Naive thymus-derived CD4-positive, alpha-beta T cell (primary cell): ENCODE measurements at regions of chr17 and their contacts with region 1.

Region 1: GRCh38 chr17:81935709-81936084 is 1.4 kb downstream of the PYCR1 start:
- DNase-seq: no peak
- ATAC-seq: no peak
- H3K4me3 ChIP-seq: no peak overlapping the region
- H3K4me3 Mint-ChIP-seq: peak overlapping the region in 8 of 10 donors; percentile 24 to 74 (median 52)
- H3K27ac ChIP-seq: no peak overlapping the region
- H3K27ac Mint-ChIP-seq: peak overlapping the region in 1 of 9 donors; percentile 25
- H3K4me1 ChIP-seq: peaks cover 0 to 3% of the 10 kb centered on the region in 2 donors
- H3K4me1 Mint-ChIP-seq: peaks cover 0 to 13% (median 9%) of the 10 kb centered on the region in 7 donors
- H3K27me3 ChIP-seq: no peaks in the 10 kb centered on the region
- H3K27me3 Mint-ChIP-seq: peaks cover 0 to 18% (median 0%) of the 10 kb centered on the region in 5 donors

Region 2: GRCh38 chr17:81948635-81949378 is 13.1 kb after region 1 on chr17:
- CTCF ChIA-PET with region 1: no interaction called
- POLR2A ChIA-PET with region 1: no interaction called
- intact Hi-C with region 1: no loop called
- DNase-seq: no peak
- ATAC-seq: no peak
- H3K4me3 ChIP-seq: no peak overlapping the region
- H3K4me3 Mint-ChIP-seq: no peak overlapping the region
- H3K27ac ChIP-seq: no peak overlapping the region
- H3K27ac Mint-ChIP-seq: no peak overlapping the region
- H3K4me1 ChIP-seq: peaks cover 0 to 4% of the 10 kb centered on the region in 2 donors
- H3K4me1 Mint-ChIP-seq: peaks cover 0 to 11% (median 4%) of the 10 kb centered on the region in 7 donors
- H3K27me3 ChIP-seq: no peaks in the 10 kb centered on the region
- H3K27me3 Mint-ChIP-seq: peaks cover 0 to 12% (median 0%) of the 10 kb centered on the region in 5 donors

Region 3: DNA sequence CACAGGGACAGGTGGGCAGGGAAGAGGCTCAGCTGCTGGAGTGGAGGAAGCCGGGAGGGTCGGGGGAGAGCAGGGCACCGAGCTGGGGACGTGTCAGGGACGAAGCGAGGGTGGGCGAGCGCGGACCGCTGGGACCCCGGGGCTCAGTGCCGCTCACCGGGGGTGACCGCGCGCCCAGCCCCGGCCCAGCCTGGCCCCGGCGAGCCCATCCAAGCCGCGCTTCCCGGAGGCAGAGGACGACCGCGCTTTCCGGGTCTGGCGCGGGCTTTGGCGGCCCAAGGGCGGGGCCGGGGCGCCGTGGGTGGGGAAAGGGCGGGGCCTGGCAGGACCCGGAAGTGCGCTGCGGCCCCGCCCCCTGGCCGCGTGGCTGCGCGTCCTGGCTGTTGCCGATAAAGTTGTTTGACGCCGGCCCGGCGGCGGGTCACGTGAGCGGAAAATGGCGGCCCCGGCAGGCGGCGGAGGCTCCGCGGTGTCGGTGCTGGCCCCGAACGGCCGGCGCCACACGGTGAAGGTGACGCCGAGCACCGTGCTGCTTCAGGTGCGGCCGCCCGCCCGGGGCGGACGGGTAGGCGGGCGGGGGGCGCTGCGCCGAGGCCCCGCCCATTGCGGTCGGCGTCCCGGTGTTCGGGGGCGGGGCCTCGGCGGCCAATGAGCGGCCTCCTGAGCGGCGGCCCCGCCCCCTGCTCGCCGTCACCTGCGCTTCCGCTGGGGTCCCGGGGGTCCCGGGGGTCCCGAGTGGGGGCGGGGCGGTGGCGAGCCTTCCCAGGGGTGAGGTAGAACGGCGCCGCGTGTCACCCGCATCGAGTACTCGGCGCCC is 41.7 kb after region 1 on chr17 and contains the start of gene ASPSCR1:
- CTCF ChIA-PET with region 1: no interaction called
- POLR2A ChIA-PET with region 1: no interaction called
- intact Hi-C with region 1: loop called in 1 of 2 experiments (anchors 2 kb)
- DNase-seq: peak; percentile 86 to 96 (median 93)
- ATAC-seq: peak; percentile 98
- H3K4me3 ChIP-seq: peak within 1 kb of the TSS; percentile 79
- H3K4me3 Mint-ChIP-seq: peak within 1 kb of the TSS; percentile 93 to 99 (median 96)
- H3K27ac ChIP-seq: peak within 1 kb of the TSS; percentile 90
- H3K27ac Mint-ChIP-seq: peak within 1 kb of the TSS; percentile 94 to 99 (median 97)
- H3K4me1 ChIP-seq: peaks cover 16 to 19% of the 10 kb centered on the region in 2 donors
- H3K4me1 Mint-ChIP-seq: peaks cover 26 to 51% (median 38%) of the 10 kb centered on the region in 7 donors
- H3K27me3 ChIP-seq: no peaks in the 10 kb centered on the region
- H3K27me3 Mint-ChIP-seq: peaks cover 0 to 7% (median 0%) of the 10 kb centered on the region in 5 donors
- total RNA-seq, gene ASPSCR1: 36.4 to 46.7 (median 46.0) TPM

Region 4: DNA sequence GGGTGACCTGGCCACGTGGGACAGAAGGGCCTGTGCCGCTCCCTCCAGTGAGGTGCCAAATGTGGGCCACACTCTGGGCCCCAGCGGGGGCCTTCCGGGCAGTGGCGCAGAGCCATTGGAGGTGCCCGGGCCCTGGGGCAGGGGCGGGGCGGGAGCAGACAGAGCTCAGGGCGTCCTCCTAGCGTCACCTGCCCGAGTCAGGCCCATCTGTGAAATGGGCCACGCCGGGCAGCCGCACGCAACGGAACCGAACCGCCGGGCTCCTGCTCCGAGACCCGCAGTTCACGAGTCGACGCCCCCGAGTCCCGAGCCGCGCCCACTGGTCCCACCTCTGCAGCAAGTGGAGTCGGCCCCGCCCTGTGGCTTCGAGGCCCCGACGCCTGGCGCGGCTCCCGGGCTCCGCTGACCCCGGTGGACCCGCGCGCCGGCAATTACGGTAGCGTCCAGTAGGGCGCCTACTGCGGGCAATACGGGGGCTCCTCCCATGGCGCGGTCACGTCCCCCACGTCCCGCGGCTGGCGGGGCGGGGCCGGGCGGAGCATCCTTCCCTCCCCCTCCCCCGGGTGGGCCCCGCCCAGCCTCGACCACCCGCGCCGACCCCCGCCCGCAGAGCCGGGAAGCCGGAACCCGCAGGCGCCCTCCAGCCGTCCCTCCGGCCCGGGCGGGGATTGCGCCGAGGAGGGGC is 295.1 kb after region 1 on chr17:
- CTCF ChIA-PET with region 1: no interaction called
- POLR2A ChIA-PET with region 1: no interaction called
- intact Hi-C with region 1: no loop called
- DNase-seq: peak in 2 of 9 donors; percentile 47 to 82
- ATAC-seq: peak; percentile 58
- H3K4me3 ChIP-seq: peak overlapping the region; percentile 35
- H3K4me3 Mint-ChIP-seq: peak overlapping the region in 7 of 10 donors; percentile 74 to 96 (median 79)
- H3K27ac ChIP-seq: peak overlapping the region; percentile 57
- H3K27ac Mint-ChIP-seq: no peak overlapping the region
- H3K4me1 ChIP-seq: peaks cover 26 to 32% of the 10 kb centered on the region in 2 donors
- H3K4me1 Mint-ChIP-seq: peaks cover 6 to 23% (median 10%) of the 10 kb centered on the region in 7 donors
- H3K27me3 ChIP-seq: no peaks in the 10 kb centered on the region
- H3K27me3 Mint-ChIP-seq: no peaks in the 10 kb centered on the region